ENCODE measurements at regions of chr9 and their contacts with region 1.

Region 1: DNA sequence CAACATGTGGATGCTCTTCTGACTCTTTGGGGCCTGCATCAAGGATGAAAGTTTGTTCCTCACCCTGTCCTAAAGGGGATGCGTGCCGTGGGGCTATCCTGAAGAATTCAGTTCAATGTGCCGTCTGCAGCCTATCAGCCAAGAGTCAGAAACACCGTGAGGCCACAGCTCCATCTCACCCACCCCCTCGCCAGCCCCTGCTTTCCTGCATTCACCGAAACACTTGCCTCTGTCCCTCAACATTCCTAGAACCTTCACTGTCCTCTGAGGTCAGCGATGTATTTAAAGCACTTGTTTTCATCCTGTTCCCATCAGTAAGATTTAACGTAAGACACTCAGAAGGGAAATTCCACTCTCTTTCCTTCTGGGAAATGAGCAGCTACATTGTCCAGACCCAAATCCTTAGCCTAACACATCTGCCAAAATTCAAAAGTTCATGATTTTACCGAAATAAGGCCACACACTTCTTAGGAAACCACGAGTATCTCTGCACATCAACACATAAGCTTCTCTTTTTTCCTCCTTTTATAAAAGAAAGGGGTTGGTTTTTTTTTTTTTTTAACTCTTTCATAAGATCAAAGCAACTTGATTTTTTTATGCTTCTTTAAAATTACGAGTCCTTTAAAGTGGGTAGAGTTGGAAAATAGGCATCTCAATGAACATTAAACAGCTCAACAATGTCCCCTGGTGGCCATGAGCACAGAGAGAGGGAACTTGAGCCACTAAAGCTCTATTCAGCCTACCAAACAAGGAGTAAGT is 100.7 kb downstream of the SUSD1 start:
- DNase-seq: peak in 6 of 10 donors; percentile 50 to 86 (median 56)

Region 2: DNA sequence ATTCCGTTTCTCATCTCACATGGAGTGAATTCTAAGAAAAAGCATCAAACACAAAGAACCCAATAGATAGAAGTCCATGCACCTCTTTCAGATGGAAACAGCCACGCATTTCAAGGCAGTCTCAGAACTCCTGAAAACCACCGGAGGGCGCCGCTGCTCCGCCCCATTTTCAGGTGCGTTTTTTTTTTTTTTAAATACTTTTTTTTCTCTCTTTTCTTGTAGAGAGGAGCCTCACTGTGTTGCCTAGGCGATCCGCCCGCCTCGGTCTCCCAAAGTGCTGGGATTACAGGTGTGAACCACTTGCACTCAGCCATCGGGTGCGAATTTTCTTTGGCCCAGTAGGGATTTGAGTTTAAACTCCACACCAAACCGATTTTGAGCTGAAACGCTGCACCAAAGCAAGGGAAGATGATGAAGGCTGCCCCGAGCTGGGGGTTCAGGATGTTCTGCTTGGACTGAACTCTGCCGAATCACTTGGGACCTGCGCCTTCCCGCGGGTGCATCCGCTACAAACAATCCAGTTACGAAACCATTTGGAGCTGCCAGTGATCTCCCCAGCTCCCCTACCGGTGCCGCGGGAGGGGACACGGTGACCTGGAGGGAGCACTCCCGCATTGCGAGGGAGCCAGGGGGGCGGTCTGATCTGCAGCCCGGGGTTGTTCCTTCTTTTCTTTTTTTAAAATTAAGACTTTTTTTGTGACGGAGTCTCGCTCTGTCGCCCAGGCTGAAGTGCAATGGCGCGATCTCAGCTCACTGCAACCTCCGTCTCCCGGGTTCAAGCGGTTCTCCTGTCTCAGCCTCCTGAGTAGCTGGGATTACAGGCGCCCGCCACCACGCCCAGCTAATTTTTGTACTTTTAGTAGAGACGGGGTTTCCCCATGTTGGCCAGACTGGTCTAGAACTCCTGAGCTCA is 476.4 kb before region 1 on chr9:
- intact Hi-C with region 1: loop called (anchors 10 kb)
- DNase-seq: peak; percentile 22 to 93 (median 55)

Region 3: DNA sequence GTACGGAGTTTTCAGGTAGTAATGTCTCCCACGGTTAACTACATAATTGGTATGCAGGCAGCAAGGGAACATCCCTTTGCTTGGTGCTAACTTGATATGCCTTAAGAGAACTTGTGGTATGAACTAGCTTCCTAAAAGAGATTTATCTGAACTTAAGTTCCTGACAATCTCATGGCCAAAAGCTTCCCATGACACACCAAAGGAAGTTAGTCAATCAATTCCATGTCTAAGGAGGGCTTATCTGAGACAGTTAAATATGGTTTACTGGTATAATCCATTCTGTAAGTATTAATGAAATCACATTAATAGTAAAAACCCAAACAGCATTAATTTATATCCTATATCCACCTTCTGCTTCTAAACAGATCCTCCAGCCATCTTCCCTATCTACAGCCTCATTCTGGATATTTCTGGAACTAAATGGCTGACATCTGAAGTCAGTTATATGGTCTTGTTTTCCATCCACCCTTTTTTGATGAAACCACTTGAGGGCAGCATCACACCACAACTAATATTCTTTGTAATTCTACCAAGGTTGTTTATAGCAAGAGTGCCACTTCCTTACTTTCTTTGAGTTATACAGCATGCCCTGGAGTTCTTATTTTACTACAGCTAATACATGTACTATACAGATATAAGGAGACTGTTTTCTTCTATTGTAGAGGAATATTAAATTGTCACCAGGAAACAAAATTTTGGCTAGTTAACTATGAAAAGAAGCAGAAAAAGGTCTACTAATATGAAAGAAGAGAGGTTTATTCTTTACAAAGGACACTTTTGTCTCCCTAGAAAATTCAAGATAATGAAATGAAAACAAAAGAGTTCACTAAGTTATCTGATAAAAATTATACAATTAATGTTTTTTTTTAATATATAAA is 314.4 kb before region 1 on chr9:
- intact Hi-C with region 1: loop called (anchors 1 kb)
- DNase-seq: peak in 2 of 10 donors; percentile 20 to 32

Region 4: GRCh38 chr9:111896353-111896958 is 178.0 kb before region 1 on chr9 and contains the start of gene UGCG:
- intact Hi-C with region 1: loop called (anchors 2 kb)
- DNase-seq: peak; percentile 72 to 99 (median 86)

Measured in posterior cingulate gyrus (tissue), 11 donors.